B cell (primary cell): ENCODE measurements at regions of chr17 and their contacts with region 1.

Region 1: GRCh38 chr17:8222630-8223356 is 12.4 kb upstream of the AURKB start:
- DNase-seq: peak; percentile 95
- ATAC-seq: peak; percentile 43
- H3K4me3 ChIP-seq: peak overlapping the region; percentile 75 to 100 (median 78)
- H3K4me3 Mint-ChIP-seq: peak overlapping the region; percentile 89
- H3K27ac ChIP-seq: peak overlapping the region; percentile 90 to 93
- H3K27ac Mint-ChIP-seq: peak overlapping the region; percentile 96
- H3K4me1 ChIP-seq: peaks cover 32 to 50% of the 10 kb centered on the region in 2 donors
- H3K4me1 Mint-ChIP-seq: peaks cover 63% of the 10 kb centered on the region
- H3K27me3 ChIP-seq: no peaks in the 10 kb centered on the region
- H3K27me3 Mint-ChIP-seq: no peaks in the 10 kb centered on the region
- CTCF ChIP-seq: no peak

Region 2: GRCh38 chr17:8156246-8156992 is 66.4 kb before region 1 on chr17:
- CTCF ChIA-PET with region 1: interaction called, 11 read pairs
- POLR2A ChIA-PET with region 1: interaction called, 15 read pairs
- intact Hi-C with region 1: loop called (anchors 1 kb)
- DNase-seq: peak; percentile 100
- ATAC-seq: peak; percentile 79
- H3K4me3 ChIP-seq: peak overlapping the region; percentile 69 to 96 (median 84)
- H3K4me3 Mint-ChIP-seq: no peak overlapping the region
- H3K27ac ChIP-seq: peak overlapping the region; percentile 98 to 100
- H3K27ac Mint-ChIP-seq: no peak overlapping the region
- H3K4me1 ChIP-seq: peaks cover 59 to 85% of the 10 kb centered on the region in 2 donors
- H3K4me1 Mint-ChIP-seq: peaks cover 50% of the 10 kb centered on the region
- H3K27me3 ChIP-seq: no peaks in the 10 kb centered on the region
- H3K27me3 Mint-ChIP-seq: no peaks in the 10 kb centered on the region
- CTCF ChIP-seq: no peak

Region 3: GRCh38 chr17:8204761-8205555 is 17.8 kb before region 1 on chr17:
- CTCF ChIA-PET with region 1: interaction called, 21 read pairs
- POLR2A ChIA-PET with region 1: interaction called, 11 read pairs
- intact Hi-C with region 1: loop called (anchors 1 kb)
- DNase-seq: no peak
- ATAC-seq: no peak
- H3K4me3 ChIP-seq: no peak overlapping the region
- H3K4me3 Mint-ChIP-seq: no peak overlapping the region
- H3K27ac ChIP-seq: no peak overlapping the region
- H3K27ac Mint-ChIP-seq: no peak overlapping the region
- H3K4me1 ChIP-seq: peaks cover 2 to 16% of the 10 kb centered on the region in 2 donors
- H3K4me1 Mint-ChIP-seq: peaks cover 7% of the 10 kb centered on the region
- H3K27me3 ChIP-seq: no peaks in the 10 kb centered on the region
- H3K27me3 Mint-ChIP-seq: no peaks in the 10 kb centered on the region
- CTCF ChIP-seq: no peak

Region 4: DNA sequence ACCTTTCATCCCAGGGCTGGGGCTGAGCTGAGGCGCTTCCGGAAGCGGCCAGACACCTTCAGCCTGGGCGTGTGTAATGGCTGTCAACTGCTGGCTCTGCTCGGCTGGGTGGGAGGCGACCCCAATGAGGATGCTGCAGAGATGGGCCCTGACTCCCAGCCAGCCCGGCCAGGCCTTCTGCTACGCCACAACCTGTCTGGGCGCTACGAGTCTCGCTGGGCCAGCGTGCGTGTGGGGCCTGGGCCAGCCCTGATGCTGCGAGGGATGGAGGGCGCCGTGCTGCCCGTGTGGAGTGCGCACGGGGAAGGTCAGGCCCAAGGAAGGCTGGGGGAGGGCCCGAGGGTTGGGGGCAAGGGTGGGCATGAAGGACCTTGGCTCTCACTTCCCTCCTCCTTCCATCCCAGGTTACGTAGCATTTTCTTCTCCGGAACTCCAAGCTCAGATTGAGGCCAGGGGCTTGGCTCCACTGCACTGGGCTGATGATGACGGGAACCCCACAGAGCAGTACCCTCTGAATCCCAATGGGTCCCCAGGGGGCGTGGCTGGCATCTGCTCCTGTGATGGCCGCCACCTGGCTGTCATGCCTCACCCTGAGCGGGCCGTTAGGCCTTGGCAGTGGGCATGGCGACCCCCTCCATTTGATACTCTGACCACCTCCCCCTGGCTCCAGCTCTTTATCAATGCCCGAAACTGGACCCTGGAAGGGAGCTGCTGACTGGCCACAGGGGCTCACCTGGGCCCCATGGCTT is 45.9 kb after region 1 on chr17:
- CTCF ChIA-PET with region 1: no interaction called
- POLR2A ChIA-PET with region 1: no interaction called
- intact Hi-C with region 1: no loop called
- DNase-seq: no peak
- ATAC-seq: no peak
- H3K4me3 ChIP-seq: no peak overlapping the region
- H3K4me3 Mint-ChIP-seq: no peak overlapping the region
- H3K27ac ChIP-seq: no peak overlapping the region
- H3K27ac Mint-ChIP-seq: no peak overlapping the region
- H3K4me1 ChIP-seq: no peaks in the 10 kb centered on the region
- H3K4me1 Mint-ChIP-seq: no peaks in the 10 kb centered on the region
- H3K27me3 ChIP-seq: no peaks in the 10 kb centered on the region
- H3K27me3 Mint-ChIP-seq: no peaks in the 10 kb centered on the region
- CTCF ChIP-seq: no peak

Region 5: GRCh38 chr17:8294814-8295316 is 72.1 kb after region 1 on chr17:
- CTCF ChIA-PET with region 1: interaction called, 15 read pairs
- POLR2A ChIA-PET with region 1: interaction called, 9 read pairs
- intact Hi-C with region 1: loop called (anchors 1 kb)
- DNase-seq: no peak
- ATAC-seq: no peak
- H3K4me3 ChIP-seq: peak overlapping the region; percentile 41 to 93 (median 89)
- H3K4me3 Mint-ChIP-seq: peak overlapping the region; percentile 94
- H3K27ac ChIP-seq: peak overlapping the region; percentile 78
- H3K27ac Mint-ChIP-seq: peak overlapping the region; percentile 95
- H3K4me1 ChIP-seq: peaks cover 5 to 21% of the 10 kb centered on the region in 2 donors
- H3K4me1 Mint-ChIP-seq: peaks cover 32% of the 10 kb centered on the region
- H3K27me3 ChIP-seq: no peaks in the 10 kb centered on the region
- H3K27me3 Mint-ChIP-seq: no peaks in the 10 kb centered on the region
- CTCF ChIP-seq: no peak

Region 6: DNA sequence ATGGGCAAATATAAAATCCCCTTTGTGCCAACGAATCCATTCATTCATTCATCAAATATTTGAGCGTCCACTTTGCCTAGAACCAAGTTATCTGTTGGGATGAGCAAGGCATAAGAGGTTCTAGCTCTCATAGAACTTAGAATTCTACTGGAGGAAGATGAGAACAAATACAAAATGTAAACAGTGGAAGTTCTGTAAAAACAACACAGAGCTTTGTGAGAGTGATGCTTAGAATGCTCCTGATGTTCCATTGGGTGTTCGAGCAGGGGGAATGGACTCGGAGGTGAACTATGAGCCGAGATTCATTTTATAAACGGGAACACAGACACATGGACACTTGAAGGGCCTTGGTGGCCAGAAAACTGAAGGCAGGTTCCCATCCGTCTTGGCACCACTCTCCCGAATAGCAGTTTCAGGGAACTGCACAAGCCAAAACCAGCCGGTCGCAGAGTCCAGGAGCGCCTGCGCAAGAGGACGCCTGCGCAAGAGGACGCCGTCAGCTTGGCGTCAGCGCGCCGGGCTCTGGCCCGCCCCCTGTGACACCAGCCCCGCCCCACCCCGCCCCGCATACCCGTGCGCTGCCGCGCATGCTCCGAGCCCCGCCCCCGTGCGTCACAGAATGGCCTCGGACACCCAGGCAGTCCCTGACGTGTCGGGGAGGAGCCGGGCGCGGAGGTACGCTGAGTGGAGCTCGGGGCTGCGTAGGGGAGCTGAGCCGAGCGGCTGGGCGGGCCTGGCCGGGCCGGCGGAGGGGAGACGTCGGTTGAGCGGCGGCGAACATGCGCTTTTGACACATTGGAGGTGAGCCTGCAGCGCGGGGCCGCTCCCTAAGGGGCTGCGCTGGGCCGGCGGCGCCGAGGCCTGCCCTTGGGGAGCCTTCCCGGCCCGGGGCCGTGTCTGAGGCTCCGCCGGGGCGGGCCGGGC is 212.7 kb after region 1 on chr17 and contains the start of gene NDEL1:
- CTCF ChIA-PET with region 1: no interaction called
- POLR2A ChIA-PET with region 1: no interaction called
- intact Hi-C with region 1: loop called (anchors 10 kb)
- DNase-seq: peak; percentile 98
- ATAC-seq: peak; percentile 94
- H3K4me3 ChIP-seq: peak within 1 kb of the TSS; percentile 77 to 91 (median 88)
- H3K4me3 Mint-ChIP-seq: peak within 1 kb of the TSS; percentile 98
- H3K27ac ChIP-seq: peak within 1 kb of the TSS; percentile 93 to 95
- H3K27ac Mint-ChIP-seq: peak within 1 kb of the TSS; percentile 98
- H3K4me1 ChIP-seq: peaks cover 20 to 23% of the 10 kb centered on the region in 2 donors
- H3K4me1 Mint-ChIP-seq: peaks cover 36% of the 10 kb centered on the region
- H3K27me3 ChIP-seq: no peaks in the 10 kb centered on the region
- H3K27me3 Mint-ChIP-seq: no peaks in the 10 kb centered on the region
- CTCF ChIP-seq: no peak
- total RNA-seq, gene NDEL1: 108 and 122 TPM in 2 replicates